ENCODE measurements at regions of chr16 and their contacts with region 1.

Region 1: GRCh38 chr16:82603784-82604411 is 22.9 kb upstream of the CDH13 start:
- DNase-seq: peak; percentile 49
- ATAC-seq: peak; percentile 91

Region 2: DNA sequence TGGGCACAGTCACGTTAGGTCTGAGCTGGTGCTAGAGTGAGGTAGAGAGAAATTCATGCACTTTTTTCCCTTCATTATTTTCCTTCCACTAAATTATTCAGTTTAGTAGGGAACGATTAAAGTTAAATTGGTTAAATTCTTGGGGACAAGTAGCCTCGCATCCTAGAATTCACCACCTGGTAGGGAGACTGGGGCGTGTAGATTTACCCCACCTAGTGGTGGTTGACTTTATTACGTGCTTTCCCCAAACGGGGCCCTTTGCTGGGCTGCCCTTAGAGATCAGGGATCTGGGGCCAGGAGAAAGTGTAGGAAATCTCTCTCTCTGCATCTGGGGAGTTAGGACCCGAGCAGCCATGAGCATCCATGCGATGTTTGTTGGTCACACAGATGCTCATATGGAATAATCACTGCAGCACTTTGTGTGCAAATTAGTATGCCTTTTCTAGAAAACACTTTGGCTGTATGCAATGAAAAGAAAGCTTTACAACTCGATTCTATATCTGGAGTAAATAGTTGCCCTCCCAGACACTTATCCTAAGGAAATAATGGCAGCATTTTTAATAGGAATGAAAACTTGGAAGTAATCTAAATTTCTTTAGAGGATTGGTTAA is 717.8 kb before region 1 on chr16:
- intact Hi-C with region 1: no loop called
- DNase-seq: no peak
- ATAC-seq: peak; percentile 59

Region 3: GRCh38 chr16:83356266-83356665 is 752.4 kb after region 1 on chr16:
- intact Hi-C with region 1: loop called (anchors 10 kb)
- DNase-seq: no peak
- ATAC-seq: peak; percentile 64

Region 4: DNA sequence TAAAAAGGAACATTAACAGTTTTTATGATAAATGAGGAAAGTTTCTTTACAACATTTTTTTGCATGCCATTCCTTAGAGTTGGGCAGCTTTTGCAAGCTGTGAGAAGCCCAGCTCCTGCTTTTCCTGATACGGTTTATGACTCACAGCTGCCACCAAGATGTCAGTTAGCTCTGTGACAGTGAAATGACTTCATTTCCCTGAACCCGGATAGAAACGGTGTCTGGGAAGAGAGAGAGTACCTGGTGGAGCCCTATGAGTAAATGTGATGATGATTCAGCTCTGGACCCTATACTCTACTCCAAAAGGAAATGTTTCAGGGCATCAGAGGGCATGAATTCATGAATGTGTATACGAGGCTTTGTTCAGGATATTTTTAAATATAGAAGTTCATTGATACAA is 837.6 kb after region 1 on chr16:
- intact Hi-C with region 1: loop called (anchors 10 kb)
- DNase-seq: no peak
- ATAC-seq: no peak

Measured in Right ventricle myocardium superior (tissue), 1 donor.